GM12878 (cell line): ENCODE measurements at regions of chrX and their contacts with region 1.

Region 1: GRCh38 chrX:153319295-153320046 is 2.1 kb downstream of the PNMA6F start:
- DNase-seq: no peak
- ATAC-seq: no peak
- H3K4me3 ChIP-seq: no peak overlapping the region
- H3K27ac ChIP-seq: no peak overlapping the region
- H3K4me1 ChIP-seq: no peaks in the 10 kb centered on the region
- H3K27me3 ChIP-seq: no peaks in the 10 kb centered on the region
- CTCF ChIP-seq: no peak
- EP300 ChIP-seq: no peak
- POLR2A ChIP-seq: no peak
- RAD21 ChIP-seq: no peak

Region 2: GRCh38 chrX:153061732-153062131 is 257.7 kb before region 1 on chrX:
- CTCF ChIA-PET with region 1: no interaction called
- POLR2A ChIA-PET with region 1: no interaction called
- RAD21 ChIA-PET with region 1: no interaction called
- SMC1A ChIA-PET with region 1: no interaction called
- in situ Hi-C with region 1: no loop called
- intact Hi-C with region 1: loop called (anchors 5 kb)
- DNase-seq: no peak
- ATAC-seq: no peak
- H3K4me3 ChIP-seq: no peak overlapping the region
- H3K27ac ChIP-seq: no peak overlapping the region
- H3K4me1 ChIP-seq: no peaks in the 10 kb centered on the region
- H3K27me3 ChIP-seq: no peaks in the 10 kb centered on the region
- CTCF ChIP-seq: no peak
- EP300 ChIP-seq: no peak
- POLR2A ChIP-seq: no peak
- RAD21 ChIP-seq: no peak

Region 3: GRCh38 chrX:153214934-153215333 is 104.5 kb before region 1 on chrX:
- CTCF ChIA-PET with region 1: no interaction called
- POLR2A ChIA-PET with region 1: no interaction called
- RAD21 ChIA-PET with region 1: no interaction called
- SMC1A ChIA-PET with region 1: no interaction called
- in situ Hi-C with region 1: no loop called
- intact Hi-C with region 1: no loop called
- DNase-seq: peak; percentile 3
- ATAC-seq: peak; percentile 80
- H3K4me3 ChIP-seq: no peak overlapping the region
- H3K27ac ChIP-seq: no peak overlapping the region
- H3K4me1 ChIP-seq: 0 out of 2 replicates have a peak, but pooled peaks cover 3% of the 10 kb centered on the region
- H3K27me3 ChIP-seq: no peaks in the 10 kb centered on the region
- CTCF ChIP-seq: no peak
- EP300 ChIP-seq: no peak
- POLR2A ChIP-seq: no peak
- RAD21 ChIP-seq: no peak

Region 4: DNA sequence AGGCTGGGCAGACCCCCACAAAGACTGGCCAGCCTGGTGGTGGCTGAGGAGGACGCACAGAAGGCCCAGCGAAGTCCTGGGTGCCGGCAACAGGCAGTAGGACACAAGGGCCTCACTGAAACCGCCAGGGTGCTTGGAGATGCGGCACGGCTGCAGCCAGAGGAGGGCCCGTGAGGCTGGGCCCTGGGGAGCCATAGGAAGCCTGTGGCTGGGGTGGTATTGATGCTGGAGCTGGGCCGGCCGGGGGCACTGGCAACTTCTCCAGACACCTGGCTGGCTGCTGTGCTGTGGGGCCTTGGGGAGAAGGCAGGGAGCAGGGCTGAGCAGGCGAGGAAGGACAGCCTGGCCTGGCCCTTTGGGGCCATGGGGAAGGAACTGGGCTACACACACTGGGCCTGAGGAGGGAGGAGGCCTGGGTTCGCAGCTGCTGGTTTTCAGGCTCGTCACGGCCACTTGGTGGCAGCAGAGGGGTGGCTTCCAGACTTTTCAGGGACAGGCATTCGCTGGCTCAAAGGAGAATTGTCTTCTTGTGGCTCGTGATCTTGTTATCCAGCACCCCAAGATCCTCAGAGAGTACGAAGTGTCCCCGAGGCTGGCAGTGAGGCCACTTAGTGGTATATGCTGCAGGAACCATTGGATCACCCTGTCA is 235.2 kb after region 1 on chrX:
- CTCF ChIA-PET with region 1: no interaction called
- POLR2A ChIA-PET with region 1: no interaction called
- RAD21 ChIA-PET with region 1: no interaction called
- SMC1A ChIA-PET with region 1: no interaction called
- in situ Hi-C with region 1: no loop called
- intact Hi-C with region 1: no loop called
- DNase-seq: no peak
- ATAC-seq: peak; percentile 94
- H3K4me3 ChIP-seq: no peak overlapping the region
- H3K27ac ChIP-seq: no peak overlapping the region
- H3K4me1 ChIP-seq: no peaks in the 10 kb centered on the region
- H3K27me3 ChIP-seq: no peaks in the 10 kb centered on the region; a peak in 1 of 4 replicates
- CTCF ChIP-seq: peak; percentile 74 to 81 (median 79)
- EP300 ChIP-seq: no peak
- POLR2A ChIP-seq: no peak
- RAD21 ChIP-seq: peak; percentile 73